AG04449 (cell line): ENCODE measurements at regions of chr17 and their contacts with region 1.

Region 1: DNA sequence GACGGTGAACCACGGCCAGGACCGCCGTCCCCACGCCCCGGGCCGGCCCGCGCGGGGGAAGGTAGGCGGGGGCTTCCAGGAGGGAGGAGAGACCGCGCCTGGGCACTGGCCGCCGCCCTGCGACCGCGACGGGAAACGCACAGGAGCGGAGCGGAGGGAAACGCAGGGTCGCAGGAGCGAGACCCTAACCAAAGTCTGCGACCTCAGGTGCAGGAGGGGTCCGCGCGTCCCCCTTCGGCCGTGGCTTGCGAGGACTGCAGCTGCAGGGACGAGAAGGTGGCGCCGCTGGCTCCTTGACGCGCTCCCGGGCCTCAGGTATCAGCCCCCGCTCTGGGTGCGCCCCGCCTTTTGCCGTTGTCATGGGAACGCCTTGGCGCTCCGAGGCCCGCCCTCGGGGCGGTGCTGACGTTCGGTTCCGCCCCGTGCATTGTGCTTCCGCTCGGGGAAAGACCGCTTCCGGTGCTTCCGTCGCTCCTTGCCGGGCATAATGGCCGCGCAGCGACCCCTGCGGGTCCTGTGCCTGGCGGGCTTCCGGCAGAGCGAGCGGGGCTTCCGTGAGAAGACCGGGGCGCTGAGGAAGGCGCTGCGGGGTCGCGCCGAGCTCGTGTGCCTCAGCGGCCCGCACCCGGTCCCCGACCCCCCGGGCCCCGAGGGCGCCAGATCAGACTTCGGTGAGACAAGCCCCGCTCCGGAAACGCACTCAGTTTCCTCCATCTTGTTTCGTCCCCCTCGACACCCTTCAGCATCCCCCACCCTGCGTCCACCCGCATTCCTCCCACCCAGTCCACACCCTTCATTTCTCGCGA is at the start of gene OVCA2:
- DNase-seq: no peak
- H3K4me3 ChIP-seq: peak within 1 kb of the TSS; percentile 81
- CTCF ChIP-seq: peak; percentile 81

Region 2: DNA sequence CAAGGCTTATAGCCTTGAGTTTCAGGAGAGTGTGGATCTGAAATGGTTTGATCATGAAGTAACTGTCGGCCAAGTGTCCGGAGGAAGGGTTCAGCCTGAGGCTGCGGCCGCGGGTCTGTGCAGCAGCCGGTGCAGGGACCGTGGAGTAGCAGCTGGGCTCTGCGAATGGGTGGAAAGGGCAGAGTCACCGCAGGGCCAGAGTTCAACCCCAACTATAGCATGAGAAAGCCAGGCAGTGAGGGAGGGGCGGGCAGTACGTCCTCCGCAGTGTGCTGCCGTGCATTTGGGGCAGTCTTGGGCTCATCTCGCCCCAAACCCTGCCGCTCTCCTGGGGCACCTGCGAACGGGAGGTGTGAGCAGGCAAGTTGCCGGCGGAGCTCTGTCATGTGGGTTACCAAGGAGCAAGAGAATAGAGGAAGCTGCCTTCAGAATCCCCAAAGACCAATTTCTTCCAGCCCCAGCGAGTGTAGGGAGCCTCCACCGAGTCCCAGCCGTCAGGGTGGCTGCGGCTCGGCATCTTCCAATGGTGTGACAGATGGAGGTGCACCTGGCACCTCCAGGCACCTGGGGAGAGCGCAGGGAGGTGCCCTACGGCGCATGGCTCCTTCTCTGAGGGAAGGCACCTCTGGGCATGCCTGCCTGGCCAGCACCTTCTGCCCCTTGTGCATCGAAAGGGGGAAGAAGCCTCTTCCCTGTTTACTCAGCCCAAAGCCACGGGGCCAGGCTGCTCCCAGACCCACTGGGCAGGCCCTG is 124.6 kb before region 1 on chr17:
- CTCF ChIA-PET with region 1: no interaction called
- POLR2A ChIA-PET with region 1: no interaction called
- DNase-seq: no peak
- H3K4me3 ChIP-seq: no peak overlapping the region
- CTCF ChIP-seq: no peak

Region 3: GRCh38 chr17:2029911-2030778 is 11.6 kb before region 1 on chr17 and contains the start of gene DPH1:
- CTCF ChIA-PET with region 1: interaction called, 20 read pairs
- POLR2A ChIA-PET with region 1: interaction called, 4 read pairs
- DNase-seq: no peak
- H3K4me3 ChIP-seq: peak within 1 kb of the TSS; percentile 100
- CTCF ChIP-seq: no peak

Region 4: DNA sequence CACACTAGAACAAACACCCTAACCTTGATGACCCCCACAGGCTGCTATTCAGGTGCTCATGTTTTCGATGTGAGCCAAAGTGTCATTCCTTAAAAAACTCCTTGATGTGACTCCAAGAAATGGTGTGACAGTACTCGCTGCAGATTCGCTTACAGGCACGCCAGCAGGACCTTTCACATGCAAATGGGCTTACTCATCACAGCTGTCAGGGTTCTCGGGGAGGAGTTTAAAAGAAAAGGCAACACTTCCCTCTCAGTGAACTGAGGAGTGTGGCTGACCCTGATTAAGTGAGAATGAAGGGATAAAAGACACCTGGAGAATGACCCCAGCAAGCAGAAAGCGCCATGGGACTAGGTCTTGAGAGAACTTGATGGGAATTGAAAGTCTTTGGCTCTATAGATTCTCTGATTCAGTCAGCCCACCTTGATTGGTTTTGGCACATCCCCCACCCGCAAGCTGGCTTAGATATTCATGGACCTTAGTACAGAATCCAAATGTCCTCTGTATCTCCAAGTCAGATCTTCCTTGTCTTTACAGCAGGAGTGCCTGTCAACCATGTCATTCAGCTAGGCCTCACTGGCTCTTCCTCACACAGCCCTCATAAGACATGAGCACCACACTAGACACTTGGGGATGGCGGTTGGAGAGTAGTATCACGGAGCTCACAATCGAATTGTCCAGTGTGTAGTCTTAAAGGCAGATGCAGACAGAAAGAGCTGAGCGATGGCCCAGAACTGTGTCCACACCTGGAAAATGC is 95.8 kb after region 1 on chr17:
- CTCF ChIA-PET with region 1: no interaction called
- POLR2A ChIA-PET with region 1: no interaction called
- DNase-seq: no peak
- H3K4me3 ChIP-seq: no peak overlapping the region
- CTCF ChIP-seq: no peak